ENCODE measurements at regions of chr1 and their contacts with region 1.

Region 1: DNA sequence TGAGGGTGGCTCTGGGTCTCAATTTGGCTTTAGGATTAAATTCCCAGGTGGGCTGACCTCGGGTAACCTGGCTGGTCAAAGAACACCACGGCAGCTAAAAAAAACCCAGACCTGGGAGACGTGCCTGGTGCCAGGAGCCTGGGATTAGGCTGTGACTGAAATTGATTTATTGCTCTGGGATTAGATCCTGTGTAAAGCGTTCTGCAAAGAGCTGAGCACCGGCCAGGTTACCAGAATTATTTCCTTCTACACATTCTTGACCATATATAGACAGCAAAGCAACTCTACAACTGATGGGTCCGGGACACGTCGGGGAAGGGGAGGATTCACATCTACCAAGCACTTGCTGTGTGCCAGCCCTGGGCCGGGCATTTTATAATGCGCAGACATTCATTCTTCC is 45.2 kb downstream of the TMCO4 start:
- DNase-seq: peak; percentile 73 to 85
- ATAC-seq: peak; percentile 86
- H3K4me3 ChIP-seq: no peak overlapping the region
- H3K27ac ChIP-seq: peak overlapping the region; percentile 52 to 77
- H3K4me1 ChIP-seq: no peaks in the 10 kb centered on the region
- H3K27me3 ChIP-seq: no peaks in the 10 kb centered on the region

Region 2: GRCh38 chr1:19430121-19431068 is 324.1 kb before region 1 on chr1:
- intact Hi-C with region 1: no loop called
- DNase-seq: peak in 1 of 2 donors; percentile 62
- ATAC-seq: peak; percentile 59
- H3K4me3 ChIP-seq: no peak overlapping the region
- H3K27ac ChIP-seq: peak overlapping the region; percentile 30 to 91
- H3K4me1 ChIP-seq: peaks cover 12 to 25% of the 10 kb centered on the region in 2 donors
- H3K27me3 ChIP-seq: no peaks in the 10 kb centered on the region

Region 3: DNA sequence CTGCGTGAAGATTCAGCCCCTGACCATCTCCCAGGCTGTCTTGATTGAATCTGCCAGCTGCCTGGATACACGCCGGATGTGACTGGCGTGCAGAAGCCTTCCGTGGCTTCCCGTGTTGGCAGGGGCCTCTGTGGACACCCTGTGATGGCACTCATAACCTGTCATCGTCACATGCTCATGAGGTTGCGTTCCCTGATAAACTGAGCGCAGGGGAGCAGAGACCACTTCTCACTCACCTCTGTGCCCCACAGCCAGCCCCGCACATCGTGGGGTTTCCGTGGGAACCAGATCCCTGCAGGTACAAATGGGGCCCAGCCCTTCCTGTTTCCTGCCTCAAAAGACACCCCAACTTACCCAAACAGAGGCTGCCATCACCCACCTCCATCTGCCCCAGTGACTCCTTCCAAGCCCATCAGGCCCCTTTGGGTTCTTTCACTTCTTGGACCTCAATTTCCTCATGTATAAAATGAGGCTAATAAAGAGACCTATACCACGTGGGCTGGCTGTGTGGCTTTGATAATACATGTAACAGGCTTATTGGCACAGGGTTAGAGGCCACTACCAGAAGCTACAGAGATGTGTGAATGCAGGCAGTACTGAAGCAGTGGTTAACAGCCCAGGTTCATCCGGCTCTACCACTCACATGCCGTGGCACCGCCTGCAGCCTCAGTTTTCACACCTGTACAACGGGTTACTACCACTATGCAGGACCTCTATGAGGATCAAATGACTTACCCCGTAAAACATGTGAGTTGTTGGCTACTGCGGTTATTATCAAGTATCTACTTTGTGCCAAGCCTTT is 66.2 kb before region 1 on chr1:
- intact Hi-C with region 1: no loop called
- DNase-seq: no peak
- ATAC-seq: no peak
- H3K4me3 ChIP-seq: no peak overlapping the region
- H3K27ac ChIP-seq: no peak overlapping the region
- H3K4me1 ChIP-seq: no peaks in the 10 kb centered on the region
- H3K27me3 ChIP-seq: no peaks in the 10 kb centered on the region

Region 4: GRCh38 chr1:19735440-19736127 is 18.9 kb before region 1 on chr1:
- intact Hi-C with region 1: loop called in 1 of 2 experiments (anchors 2 kb)
- DNase-seq: peak; percentile 89 to 92
- ATAC-seq: peak; percentile 86
- H3K4me3 ChIP-seq: no peak overlapping the region
- H3K27ac ChIP-seq: peak overlapping the region; percentile 49 to 97
- H3K4me1 ChIP-seq: peaks cover 0 to 3% of the 10 kb centered on the region in 2 donors
- H3K27me3 ChIP-seq: no peaks in the 10 kb centered on the region